Caco-2 (cell line): ENCODE measurements at regions of chr11 and their contacts with region 1.

Region 1: DNA sequence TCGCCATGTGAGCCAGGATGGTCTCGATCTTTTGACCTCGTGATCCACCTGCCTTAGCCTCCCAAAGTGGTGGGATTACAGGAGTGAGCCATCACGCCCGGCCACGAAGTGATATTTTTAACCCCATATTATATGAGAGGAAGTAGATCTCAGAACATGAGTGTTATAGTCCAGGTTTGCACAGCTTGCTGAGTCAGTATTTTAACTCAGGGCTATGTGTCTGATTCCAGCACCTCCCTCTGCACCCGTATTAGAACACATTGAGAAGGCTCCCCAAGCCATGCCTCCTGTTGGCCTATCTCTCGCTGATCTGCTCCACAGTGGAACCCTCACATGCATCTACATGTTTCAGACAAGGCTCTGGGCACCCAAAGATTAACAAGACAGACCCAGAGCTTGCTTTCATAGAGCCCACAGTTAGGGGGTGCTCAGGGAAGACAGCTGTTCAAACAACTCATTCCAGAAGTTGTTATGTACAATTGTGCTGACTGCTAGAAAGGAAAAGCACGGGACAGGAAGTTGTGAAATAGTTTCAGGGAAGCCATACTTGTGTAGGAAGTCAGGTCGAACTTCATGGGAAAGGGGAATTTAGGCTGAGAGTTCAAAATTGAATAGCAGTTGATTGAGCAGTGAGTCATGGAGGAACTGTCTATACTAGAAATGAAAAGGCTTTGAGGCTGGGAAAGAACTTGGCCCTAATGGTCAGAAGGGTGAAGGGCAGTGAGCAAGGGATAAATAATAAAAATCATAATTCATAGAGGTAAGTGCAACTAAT is 49.3 kb upstream of the CLPB start:
- DNase-seq: no peak
- H3K4me3 ChIP-seq: no peak overlapping the region
- H3K4me3 Mint-ChIP-seq: no peak overlapping the region
- H3K27ac Mint-ChIP-seq: no peak overlapping the region
- H3K4me1 ChIP-seq: no peaks in the 10 kb centered on the region
- H3K4me1 Mint-ChIP-seq: peaks cover 16% of the 10 kb centered on the region
- H3K27me3 ChIP-seq: no peaks in the 10 kb centered on the region
- H3K27me3 Mint-ChIP-seq: no peaks in the 10 kb centered on the region
- CTCF ChIP-seq: no peak

Region 2: DNA sequence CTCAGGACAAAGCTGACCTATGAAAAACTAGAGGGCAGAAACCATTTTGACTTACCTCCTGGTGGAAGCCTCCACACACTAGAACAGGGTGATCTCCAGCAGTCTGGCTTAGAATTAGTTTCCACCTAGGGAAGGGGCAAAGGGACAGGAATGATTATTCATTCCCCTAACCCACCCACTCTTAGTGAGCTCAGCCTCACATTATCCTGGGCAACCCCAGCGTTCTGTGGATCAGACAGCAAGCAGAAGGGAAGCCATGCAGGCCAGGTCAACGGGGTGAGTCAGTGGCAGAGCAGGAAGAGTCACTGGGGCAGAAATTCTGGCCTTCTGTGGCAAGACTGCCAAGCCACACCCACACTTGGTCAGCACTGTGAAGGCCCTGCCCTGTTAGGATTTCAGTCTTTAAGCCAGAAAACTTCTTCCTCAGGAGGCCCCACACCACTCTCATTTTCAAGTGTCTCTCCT is 413.8 kb before region 1 on chr11:
- CTCF ChIA-PET with region 1: no interaction called
- POLR2A ChIA-PET with region 1: no interaction called
- intact Hi-C with region 1: no loop called
- DNase-seq: peak; percentile 53 to 55
- H3K4me3 ChIP-seq: no peak overlapping the region
- H3K4me3 Mint-ChIP-seq: no peak overlapping the region
- H3K27ac Mint-ChIP-seq: no peak overlapping the region
- H3K4me1 ChIP-seq: peaks cover 26% of the 10 kb centered on the region
- H3K4me1 Mint-ChIP-seq: peaks cover 31% of the 10 kb centered on the region
- H3K27me3 ChIP-seq: no peaks in the 10 kb centered on the region
- H3K27me3 Mint-ChIP-seq: no peaks in the 10 kb centered on the region
- CTCF ChIP-seq: no peak

Region 3: DNA sequence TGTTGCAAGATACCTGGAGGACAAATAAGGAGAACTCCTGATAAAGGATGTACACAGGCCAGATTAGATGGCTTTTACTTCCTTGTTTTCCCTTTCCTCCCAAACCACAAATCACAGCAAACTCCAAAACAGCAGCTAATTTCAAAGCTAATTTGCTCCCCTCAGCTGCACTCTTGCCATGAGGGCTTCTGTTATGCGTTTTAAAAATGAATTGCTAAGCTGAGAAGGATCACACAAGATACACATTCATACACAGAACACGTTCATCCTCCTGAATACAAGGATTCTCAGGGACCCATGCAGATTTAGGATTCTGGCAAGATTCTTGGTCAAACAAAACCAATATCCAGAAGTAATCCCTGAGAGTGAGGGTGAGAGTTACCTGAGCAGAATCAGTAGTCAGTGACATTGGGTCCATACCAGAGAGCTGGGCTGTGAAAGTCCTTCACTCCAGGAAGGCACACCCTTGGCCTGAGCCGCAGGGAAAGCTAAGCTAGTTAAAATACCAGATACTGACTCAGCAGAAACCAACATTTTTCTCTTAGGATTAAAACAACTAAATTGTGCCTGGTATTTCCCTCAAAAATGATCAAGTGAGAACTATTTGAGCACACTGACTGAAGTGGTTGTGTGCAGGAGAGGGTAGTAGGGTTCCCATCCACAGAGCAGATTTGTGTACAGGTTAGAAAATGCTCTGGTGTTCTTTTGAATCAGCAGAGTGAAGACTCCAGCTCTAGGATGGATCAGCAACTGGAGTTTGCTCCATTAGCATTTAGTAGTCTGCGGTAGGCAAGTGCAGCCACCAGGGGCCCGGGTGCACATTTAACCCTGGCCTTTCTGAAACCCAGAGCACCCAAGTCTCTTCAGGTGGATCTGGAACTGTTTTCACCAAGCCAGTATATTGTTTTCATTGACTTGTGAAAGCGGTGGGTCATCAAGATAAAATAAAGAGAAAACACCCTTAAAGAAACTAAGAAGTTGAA is 51.3 kb after region 1 on chr11:
- CTCF ChIA-PET with region 1: no interaction called
- POLR2A ChIA-PET with region 1: no interaction called
- intact Hi-C with region 1: loop called (anchors 2 kb)
- DNase-seq: peak; percentile 47 to 50
- H3K4me3 ChIP-seq: no peak overlapping the region
- H3K4me3 Mint-ChIP-seq: no peak overlapping the region
- H3K27ac Mint-ChIP-seq: no peak overlapping the region
- H3K4me1 ChIP-seq: peaks cover 15% of the 10 kb centered on the region
- H3K4me1 Mint-ChIP-seq: peaks cover 17% of the 10 kb centered on the region
- H3K27me3 ChIP-seq: no peaks in the 10 kb centered on the region; the same call in 1 of the 2 replicates
- H3K27me3 Mint-ChIP-seq: peaks cover 13% of the 10 kb centered on the region
- CTCF ChIP-seq: peak; percentile 33 to 36

Region 4: GRCh38 chr11:72553706-72554105 is 70.1 kb after region 1 on chr11:
- CTCF ChIA-PET with region 1: no interaction called
- POLR2A ChIA-PET with region 1: no interaction called
- intact Hi-C with region 1: loop called (anchors 5 kb)
- DNase-seq: no peak
- H3K4me3 ChIP-seq: no peak overlapping the region
- H3K4me3 Mint-ChIP-seq: no peak overlapping the region
- H3K27ac Mint-ChIP-seq: no peak overlapping the region
- H3K4me1 ChIP-seq: no peaks in the 10 kb centered on the region
- H3K4me1 Mint-ChIP-seq: peaks cover 18% of the 10 kb centered on the region
- H3K27me3 ChIP-seq: no peaks in the 10 kb centered on the region
- H3K27me3 Mint-ChIP-seq: no peaks in the 10 kb centered on the region
- CTCF ChIP-seq: peak in 1 of 2 experiments; percentile 42

Region 5: DNA sequence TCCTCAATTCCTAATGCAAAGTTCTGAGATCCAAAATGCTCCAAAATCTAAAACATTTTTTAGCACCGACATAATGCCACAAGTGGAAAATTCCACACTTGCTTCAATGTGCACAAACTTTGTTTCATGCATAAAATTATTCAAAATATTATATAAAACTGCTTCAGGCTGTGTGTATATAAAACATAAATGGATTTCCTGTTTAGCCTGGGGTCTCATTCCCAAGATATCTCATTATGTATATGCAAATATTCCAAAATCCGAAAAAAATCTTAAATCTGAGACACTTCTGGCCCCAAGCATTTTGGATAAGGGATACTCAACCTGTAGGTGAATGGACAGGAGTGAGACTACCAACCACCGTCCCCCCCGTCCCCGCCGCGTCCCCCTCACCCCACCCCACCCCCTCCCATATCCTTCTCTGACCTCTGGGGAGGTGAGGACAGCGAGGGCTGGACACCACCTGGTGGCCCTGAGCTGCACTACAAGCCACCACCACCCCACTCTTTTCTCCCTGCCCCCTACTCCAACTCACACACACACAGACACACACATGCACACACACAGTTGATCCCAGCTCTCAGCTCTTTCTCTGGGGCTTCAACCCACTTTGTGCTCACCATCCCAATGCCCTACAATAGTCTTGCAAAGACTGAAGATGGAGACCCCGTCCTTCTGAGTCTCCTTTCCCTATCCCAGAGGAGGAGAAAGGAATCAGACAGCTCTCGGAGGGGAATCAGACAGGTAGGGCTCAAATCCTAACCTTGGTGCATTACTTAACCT is 89.7 kb after region 1 on chr11:
- CTCF ChIA-PET with region 1: interaction called, 22 read pairs
- POLR2A ChIA-PET with region 1: no interaction called
- intact Hi-C with region 1: loop called (anchors 1 kb)
- DNase-seq: peak; percentile 73 to 82
- H3K4me3 ChIP-seq: no peak overlapping the region
- H3K4me3 Mint-ChIP-seq: peak overlapping the region; percentile 9
- H3K27ac Mint-ChIP-seq: peak overlapping the region; percentile 88
- H3K4me1 ChIP-seq: peaks cover 63% of the 10 kb centered on the region
- H3K4me1 Mint-ChIP-seq: peaks cover 51% of the 10 kb centered on the region
- H3K27me3 ChIP-seq: no peaks in the 10 kb centered on the region
- H3K27me3 Mint-ChIP-seq: no peaks in the 10 kb centered on the region
- CTCF ChIP-seq: peak; percentile 82 to 94

Region 6: GRCh38 chr11:72585762-72586311 is 102.2 kb after region 1 on chr11:
- CTCF ChIA-PET with region 1: interaction called, 5 read pairs
- POLR2A ChIA-PET with region 1: no interaction called
- intact Hi-C with region 1: loop called (anchors 1 kb)
- DNase-seq: peak; percentile 75 to 86
- H3K4me3 ChIP-seq: no peak overlapping the region
- H3K4me3 Mint-ChIP-seq: no peak overlapping the region
- H3K27ac Mint-ChIP-seq: no peak overlapping the region
- H3K4me1 ChIP-seq: no peaks in the 10 kb centered on the region
- H3K4me1 Mint-ChIP-seq: no peaks in the 10 kb centered on the region
- H3K27me3 ChIP-seq: peaks cover under 1% of the 10 kb centered on the region; the same call in 1 of the 2 replicates
- H3K27me3 Mint-ChIP-seq: peaks cover 7% of the 10 kb centered on the region
- CTCF ChIP-seq: peak; percentile 97 to 98

Region 7: GRCh38 chr11:72642884-72643511 is 159.4 kb after region 1 on chr11:
- CTCF ChIA-PET with region 1: interaction called, 3 read pairs
- POLR2A ChIA-PET with region 1: no interaction called
- intact Hi-C with region 1: loop called (anchors 1 kb)
- DNase-seq: peak; percentile 60 to 85
- H3K4me3 ChIP-seq: peak overlapping the region; percentile 52
- H3K4me3 Mint-ChIP-seq: peak overlapping the region; percentile 61
- H3K27ac Mint-ChIP-seq: no peak overlapping the region
- H3K4me1 ChIP-seq: peaks cover 5% of the 10 kb centered on the region; the same call in 1 of the 2 replicates
- H3K4me1 Mint-ChIP-seq: no peaks in the 10 kb centered on the region
- H3K27me3 ChIP-seq: peaks cover 12% of the 10 kb centered on the region
- H3K27me3 Mint-ChIP-seq: peaks cover 3% of the 10 kb centered on the region
- CTCF ChIP-seq: peak; percentile 97 to 100